Calu3 (cell line): ENCODE measurements at regions of chr1 and their contacts with region 1.

Region 1: DNA sequence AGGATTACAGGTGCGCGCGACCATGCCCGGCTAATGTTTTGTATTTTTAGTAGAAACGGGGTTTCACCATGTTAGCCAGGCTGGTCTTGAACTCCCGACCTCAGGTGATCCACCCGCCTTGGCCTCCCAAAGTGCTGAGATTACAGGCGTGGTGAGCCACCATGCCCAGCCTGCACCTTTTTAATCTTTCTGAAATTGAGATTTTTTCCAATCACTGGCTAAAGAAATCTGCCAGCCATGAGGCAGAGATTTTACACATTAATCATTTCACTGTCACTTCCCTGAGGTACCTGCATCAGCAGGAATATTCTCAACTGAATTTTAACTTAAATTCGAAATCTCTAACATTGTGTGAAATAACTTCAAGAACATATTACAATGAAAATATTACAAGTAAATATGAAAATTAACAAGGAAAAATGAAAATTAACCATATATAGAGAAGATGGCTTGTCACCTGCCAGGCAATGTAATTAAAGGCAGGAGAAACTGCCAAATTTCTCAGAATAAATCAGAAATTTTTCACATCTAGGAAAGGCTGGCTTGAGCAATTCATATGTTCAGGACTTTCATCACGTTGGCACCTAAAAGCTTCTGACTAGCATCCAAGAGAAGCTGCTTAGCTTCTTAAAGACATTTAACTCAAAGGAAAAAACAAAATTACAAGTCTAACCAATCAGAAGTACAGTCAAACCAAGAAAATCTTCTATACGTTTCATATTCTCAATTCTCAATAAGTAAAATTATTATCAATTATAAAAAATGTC is 5.9 kb downstream of the ANKRD13C start:
- DNase-seq: no peak
- H3K4me3 Mint-ChIP-seq: no peak overlapping the region
- H3K27ac Mint-ChIP-seq: no peak overlapping the region
- H3K4me1 Mint-ChIP-seq: peaks cover 8% of the 10 kb centered on the region
- H3K27me3 Mint-ChIP-seq: no peaks in the 10 kb centered on the region
- CTCF ChIP-seq: no peak

Region 2: DNA sequence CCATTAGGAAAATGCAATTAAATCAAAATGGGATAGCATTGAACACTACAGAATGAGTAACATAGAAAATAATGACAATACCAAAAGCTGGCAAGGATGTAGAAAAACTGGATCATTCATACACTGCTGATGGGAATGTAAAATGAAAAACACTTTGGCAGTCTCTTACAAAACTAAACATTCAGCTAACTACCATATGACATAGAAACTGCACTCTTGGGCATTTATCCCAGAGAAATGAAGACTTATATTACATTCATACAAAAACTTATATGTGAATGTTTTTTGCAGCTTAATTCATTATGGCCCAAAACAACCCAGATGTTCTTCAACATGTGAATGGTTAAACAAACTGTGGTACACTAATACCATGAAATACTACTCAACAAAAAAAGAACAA is 60.4 kb before region 1 on chr1:
- CTCF ChIA-PET with region 1: no interaction called
- intact Hi-C with region 1: loop called (anchors 10 kb)
- DNase-seq: no peak
- H3K4me3 Mint-ChIP-seq: no peak overlapping the region
- H3K27ac Mint-ChIP-seq: peak overlapping the region; percentile 9
- H3K4me1 Mint-ChIP-seq: no peaks in the 10 kb centered on the region
- H3K27me3 Mint-ChIP-seq: no peaks in the 10 kb centered on the region
- CTCF ChIP-seq: no peak

Region 3: DNA sequence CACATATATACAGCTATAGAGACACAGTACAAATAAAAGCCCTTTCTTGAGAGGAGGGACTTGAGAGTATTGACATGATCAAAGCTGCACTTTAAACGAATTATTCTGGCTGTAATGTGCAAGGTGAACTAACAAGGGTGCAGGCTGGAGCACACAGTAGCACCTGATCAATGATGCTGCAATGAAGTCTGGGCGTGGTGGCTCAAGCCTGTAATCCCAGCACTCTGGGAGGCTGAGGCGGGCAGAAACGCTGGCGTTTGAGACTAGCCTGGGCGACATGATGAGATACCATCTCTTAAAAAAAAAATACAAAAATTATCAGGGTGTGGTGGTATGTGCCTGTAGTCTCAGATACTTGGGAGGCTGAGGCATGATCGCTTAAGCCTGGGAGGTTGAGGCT is 48.4 kb after region 1 on chr1:
- CTCF ChIA-PET with region 1: no interaction called
- intact Hi-C with region 1: no loop called
- DNase-seq: no peak
- H3K4me3 Mint-ChIP-seq: no peak overlapping the region
- H3K27ac Mint-ChIP-seq: no peak overlapping the region
- H3K4me1 Mint-ChIP-seq: no peaks in the 10 kb centered on the region
- H3K27me3 Mint-ChIP-seq: no peaks in the 10 kb centered on the region
- CTCF ChIP-seq: no peak